ENCODE measurements at regions of chr3 and their contacts with region 1.

Region 1: DNA sequence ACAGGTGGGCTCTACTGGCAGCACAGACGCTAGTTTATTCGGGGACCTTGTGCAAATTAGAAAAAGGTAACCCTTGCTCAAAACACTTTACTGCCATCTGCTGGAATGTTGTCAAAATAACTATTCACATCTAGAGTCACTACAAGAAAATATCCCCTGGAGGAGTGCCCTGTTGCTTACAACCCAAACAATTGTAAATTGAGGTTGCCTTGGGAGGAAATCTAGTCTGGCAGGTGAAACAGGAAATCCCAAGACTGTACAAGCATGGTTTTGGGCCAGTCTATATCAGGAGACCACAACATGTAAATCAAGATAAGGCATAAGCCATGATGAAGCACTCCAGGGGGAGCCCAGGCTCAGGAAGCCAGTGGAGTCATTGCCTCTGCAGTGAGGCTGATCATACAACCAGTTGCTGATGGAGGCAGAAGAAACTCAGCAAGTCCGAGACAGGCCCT is 136.8 kb upstream of the ACP3 start:
- DNase-seq: peak; percentile 38
- ATAC-seq: peak; percentile 75
- H3K4me3 ChIP-seq: no peak overlapping the region
- H3K27ac ChIP-seq: no peak overlapping the region
- H3K4me1 ChIP-seq: no peaks in the 10 kb centered on the region
- H3K27me3 ChIP-seq: no peaks in the 10 kb centered on the region; a peak in 1 of 5 replicates
- CTCF ChIP-seq: peak; percentile 55
- EP300 ChIP-seq: no peak
- POLR2A ChIP-seq: no peak
- RAD21 ChIP-seq: no peak

Region 2: DNA sequence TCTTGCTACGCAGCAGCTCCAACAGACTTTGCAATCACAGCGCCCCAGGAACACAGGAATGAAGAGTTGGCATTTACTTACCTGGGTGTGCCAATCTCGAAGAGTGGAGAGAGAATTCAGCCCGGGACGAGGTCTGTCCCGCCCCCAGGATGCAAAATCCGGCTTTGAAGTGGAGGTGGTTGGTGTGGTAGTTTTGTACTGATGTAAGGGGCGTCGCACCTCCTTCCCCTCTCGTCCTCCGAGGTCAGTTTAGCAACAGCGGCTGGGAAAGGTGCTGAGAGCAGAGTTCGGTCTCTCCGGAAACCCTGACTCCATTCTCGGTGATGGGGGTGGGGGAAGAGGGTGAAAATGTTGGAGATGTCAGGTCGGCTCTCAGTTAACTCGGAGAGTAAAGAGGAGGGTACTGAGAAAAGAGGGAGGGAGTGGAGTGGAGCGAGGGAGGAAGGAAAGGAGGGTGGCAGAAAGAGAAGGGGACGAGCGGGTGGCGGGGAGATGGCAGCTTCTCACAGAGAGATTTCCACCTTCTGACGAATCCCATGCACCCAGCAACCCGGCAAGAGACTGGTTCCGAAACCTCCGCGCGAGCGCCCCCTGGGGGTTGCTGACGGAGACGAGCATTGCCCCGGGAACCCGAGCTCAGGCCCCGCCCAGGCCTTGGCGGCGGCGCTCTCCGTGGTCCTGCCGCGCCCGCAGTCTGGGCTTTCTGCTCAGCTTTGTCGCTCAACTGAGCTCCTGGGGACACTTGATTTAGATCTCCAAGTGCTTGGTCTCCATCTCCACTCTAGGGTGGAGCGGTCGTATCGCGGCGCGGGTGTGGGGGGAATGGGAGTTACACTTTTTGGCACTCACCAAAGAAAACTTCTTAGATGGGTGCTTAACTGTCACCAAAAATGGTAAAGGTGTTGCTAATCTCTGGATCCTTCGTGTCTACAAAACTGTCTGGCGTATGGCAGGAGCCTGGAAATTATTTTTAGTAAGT is 145.6 kb before region 1 on chr3 and contains the start of gene CPNE4:
- CTCF ChIA-PET with region 1: interaction called, 5 read pairs
- POLR2A ChIA-PET with region 1: no interaction called
- in situ Hi-C with region 1: no loop called
- intact Hi-C with region 1: loop called (anchors 1 kb)
- DNase-seq: peak; percentile 32
- ATAC-seq: peak; percentile 100
- H3K4me3 ChIP-seq: no peak within 1 kb of the TSS
- H3K27ac ChIP-seq: no peak within 1 kb of the TSS
- H3K4me1 ChIP-seq: no peaks in the 10 kb centered on the region
- H3K27me3 ChIP-seq: peaks cover 0 to 10% of the 10 kb centered on the region in 2 experiments; a peak in 1 of 5 replicates
- CTCF ChIP-seq: peak; percentile 82
- EP300 ChIP-seq: no peak
- POLR2A ChIP-seq: no peak
- RAD21 ChIP-seq: peak; percentile 48; the same call in 1 of the 2 replicates
- total RNA-seq, gene CPNE4: not detected in 2 replicates